Activated CD4-positive, alpha-beta T cell treated with anti-CD3 and anti-CD28 coated beads for 36 hours (primary cell): ENCODE measurements at regions of chr18 and their contacts with region 1.

Region 1: DNA sequence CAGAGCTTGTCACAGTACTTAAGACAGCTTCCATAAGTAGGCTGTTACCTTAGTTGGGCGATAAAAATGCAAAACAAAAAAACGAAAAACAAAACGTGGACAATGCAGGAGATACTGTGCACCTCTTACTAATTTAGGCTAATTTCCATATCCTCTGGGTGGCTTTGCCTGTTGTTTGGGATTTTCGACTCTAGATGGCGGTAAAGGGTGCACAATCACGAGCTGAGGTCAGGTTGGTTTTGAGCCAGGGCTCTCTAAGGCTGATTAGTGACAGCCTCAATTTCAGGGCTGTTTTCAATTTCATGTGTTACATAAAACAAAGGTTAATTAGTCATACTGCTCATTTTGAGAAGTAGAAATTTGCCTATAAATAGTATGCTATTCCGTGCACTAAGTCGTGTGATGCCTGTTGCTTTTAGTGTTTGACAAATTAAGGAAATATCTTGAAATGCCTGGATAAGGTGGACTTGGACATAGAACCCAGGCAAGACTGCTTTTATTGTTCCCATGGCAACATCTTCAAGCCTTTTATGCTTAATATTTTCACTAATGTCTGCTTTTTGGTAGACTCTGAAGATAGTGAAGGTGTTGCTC is 493.1 kb downstream of the SOCS6 start:
- DNase-seq: peak; percentile 78
- ATAC-seq: peak; percentile 99
- H3K4me3 Mint-ChIP-seq: no peak overlapping the region
- H3K27ac Mint-ChIP-seq: no peak overlapping the region
- H3K4me1 Mint-ChIP-seq: peaks cover 13% of the 10 kb centered on the region
- H3K27me3 Mint-ChIP-seq: no peaks in the 10 kb centered on the region

Region 2: GRCh38 chr18:70491734-70492348 is 290.1 kb before region 1 on chr18:
- CTCF ChIA-PET with region 1: no interaction called
- POLR2A ChIA-PET with region 1: no interaction called
- intact Hi-C with region 1: loop called in 1 of 2 experiments (anchors 5 kb)
- DNase-seq: peak; percentile 74
- ATAC-seq: peak; percentile 71
- H3K4me3 Mint-ChIP-seq: no peak overlapping the region
- H3K27ac Mint-ChIP-seq: no peak overlapping the region
- H3K4me1 Mint-ChIP-seq: peaks cover 2% of the 10 kb centered on the region
- H3K27me3 Mint-ChIP-seq: peaks cover 2% of the 10 kb centered on the region

Region 3: GRCh38 chr18:70598406-70598805 is 183.6 kb before region 1 on chr18:
- CTCF ChIA-PET with region 1: no interaction called
- POLR2A ChIA-PET with region 1: no interaction called
- intact Hi-C with region 1: loop called (anchors 5 kb)
- DNase-seq: no peak
- ATAC-seq: no peak
- H3K4me3 Mint-ChIP-seq: no peak overlapping the region
- H3K27ac Mint-ChIP-seq: no peak overlapping the region
- H3K4me1 Mint-ChIP-seq: peaks cover 8% of the 10 kb centered on the region
- H3K27me3 Mint-ChIP-seq: no peaks in the 10 kb centered on the region

Region 4: DNA sequence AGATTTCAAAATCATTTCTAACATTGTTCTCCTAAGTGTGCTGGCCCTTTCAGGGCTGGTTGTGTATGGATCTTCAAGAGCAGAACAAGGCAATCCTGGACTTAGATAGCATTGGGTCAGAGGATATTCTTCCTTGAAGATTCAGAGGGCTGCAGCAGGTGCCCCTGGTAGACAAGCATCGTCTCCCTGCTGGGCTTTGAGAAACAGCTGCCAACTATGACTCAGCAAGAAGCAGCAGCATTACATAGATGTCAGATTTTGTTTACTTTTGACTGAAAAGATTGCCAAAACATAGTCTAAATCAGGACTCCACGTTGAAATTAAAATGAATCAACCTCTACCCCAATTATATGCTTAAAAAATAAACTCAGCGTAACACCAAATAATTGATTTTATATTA is 125.7 kb after region 1 on chr18:
- CTCF ChIA-PET with region 1: no interaction called
- POLR2A ChIA-PET with region 1: no interaction called
- intact Hi-C with region 1: no loop called
- DNase-seq: no peak
- ATAC-seq: no peak
- H3K4me3 Mint-ChIP-seq: no peak overlapping the region
- H3K27ac Mint-ChIP-seq: no peak overlapping the region
- H3K4me1 Mint-ChIP-seq: peaks cover 7% of the 10 kb centered on the region
- H3K27me3 Mint-ChIP-seq: no peaks in the 10 kb centered on the region

Region 5: GRCh38 chr18:71784777-71785176 is 1002.8 kb after region 1 on chr18:
- CTCF ChIA-PET with region 1: no interaction called
- POLR2A ChIA-PET with region 1: no interaction called
- intact Hi-C with region 1: loop called in 1 of 2 experiments (anchors 5 kb)
- DNase-seq: peak; percentile 24
- ATAC-seq: no peak
- H3K4me3 Mint-ChIP-seq: no peak overlapping the region
- H3K27ac Mint-ChIP-seq: no peak overlapping the region
- H3K4me1 Mint-ChIP-seq: no peaks in the 10 kb centered on the region
- H3K27me3 Mint-ChIP-seq: no peaks in the 10 kb centered on the region

Region 6: DNA sequence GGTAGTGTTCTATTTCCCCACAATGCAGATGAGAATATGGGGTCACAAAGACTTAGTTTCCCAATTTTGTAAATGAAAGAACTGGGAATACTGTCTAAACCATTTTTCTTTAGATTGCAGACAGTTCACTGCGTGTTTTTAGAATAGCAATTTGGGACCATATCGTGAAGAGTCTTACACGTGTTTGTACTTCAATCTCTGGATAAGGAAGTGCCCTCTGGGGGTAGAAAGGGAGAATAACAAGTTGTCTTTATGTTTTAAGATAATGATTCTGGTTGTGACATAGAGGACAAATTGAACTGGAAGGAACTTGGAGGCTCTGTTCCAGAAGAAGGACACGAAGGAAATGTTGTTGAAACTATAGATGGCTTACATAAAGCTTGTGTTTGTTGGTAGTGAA is 1304.5 kb after region 1 on chr18:
- CTCF ChIA-PET with region 1: no interaction called
- POLR2A ChIA-PET with region 1: no interaction called
- intact Hi-C with region 1: loop called in 1 of 2 experiments (anchors 2 kb)
- DNase-seq: no peak
- ATAC-seq: peak; percentile 33
- H3K4me3 Mint-ChIP-seq: no peak overlapping the region
- H3K27ac Mint-ChIP-seq: no peak overlapping the region
- H3K4me1 Mint-ChIP-seq: no peaks in the 10 kb centered on the region
- H3K27me3 Mint-ChIP-seq: no peaks in the 10 kb centered on the region

Region 7: DNA sequence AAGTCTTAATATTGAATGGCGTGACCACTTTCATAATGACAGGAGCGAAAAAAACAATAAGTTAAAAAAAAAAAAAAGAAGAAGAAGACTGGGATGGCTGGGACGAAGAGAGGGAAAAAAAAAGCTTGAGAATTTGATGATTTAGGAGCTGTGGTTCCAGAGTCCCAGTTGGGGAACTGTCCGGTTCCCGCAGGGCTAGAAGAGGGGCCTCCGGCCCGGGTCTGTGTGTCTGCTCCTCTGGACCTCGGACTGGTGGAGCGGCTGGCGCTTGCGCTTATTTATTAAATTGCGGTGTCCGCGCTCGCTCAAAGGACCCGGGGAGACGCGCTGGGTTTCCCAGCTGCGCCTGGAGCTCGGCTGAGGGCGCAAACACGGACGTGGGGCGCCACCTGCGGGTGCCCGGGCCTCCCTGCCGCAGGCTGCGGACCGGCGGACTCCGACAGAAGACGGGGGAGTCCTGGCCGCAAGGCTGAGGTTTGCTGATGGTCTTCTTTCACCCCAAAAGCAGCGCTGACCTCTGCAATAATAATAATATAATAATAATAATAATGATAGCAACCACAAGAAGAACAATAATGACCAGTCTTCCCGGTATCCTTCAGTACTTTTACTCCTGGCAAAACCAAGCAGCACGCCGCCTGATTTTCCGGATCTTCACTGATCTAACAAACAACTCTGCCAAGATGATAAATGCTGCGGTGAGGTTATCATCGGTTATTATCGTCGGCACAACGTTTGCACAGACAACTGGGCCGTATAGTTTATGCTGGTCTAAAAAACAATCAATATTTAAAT is 1762.3 kb after region 1 on chr18 and contains the start of gene CBLN2:
- CTCF ChIA-PET with region 1: no interaction called
- POLR2A ChIA-PET with region 1: no interaction called
- intact Hi-C with region 1: loop called in 1 of 2 experiments (anchors 5 kb)
- DNase-seq: peak; percentile 77
- ATAC-seq: peak; percentile 76
- H3K4me3 Mint-ChIP-seq: no peak within 1 kb of the TSS
- H3K27ac Mint-ChIP-seq: no peak within 1 kb of the TSS
- H3K4me1 Mint-ChIP-seq: peaks cover 12% of the 10 kb centered on the region
- H3K27me3 Mint-ChIP-seq: peaks cover 34% of the 10 kb centered on the region
- total RNA-seq, gene CBLN2: not detected